ENCODE measurements at regions of chr11 and their contacts with region 1.

Region 1: DNA sequence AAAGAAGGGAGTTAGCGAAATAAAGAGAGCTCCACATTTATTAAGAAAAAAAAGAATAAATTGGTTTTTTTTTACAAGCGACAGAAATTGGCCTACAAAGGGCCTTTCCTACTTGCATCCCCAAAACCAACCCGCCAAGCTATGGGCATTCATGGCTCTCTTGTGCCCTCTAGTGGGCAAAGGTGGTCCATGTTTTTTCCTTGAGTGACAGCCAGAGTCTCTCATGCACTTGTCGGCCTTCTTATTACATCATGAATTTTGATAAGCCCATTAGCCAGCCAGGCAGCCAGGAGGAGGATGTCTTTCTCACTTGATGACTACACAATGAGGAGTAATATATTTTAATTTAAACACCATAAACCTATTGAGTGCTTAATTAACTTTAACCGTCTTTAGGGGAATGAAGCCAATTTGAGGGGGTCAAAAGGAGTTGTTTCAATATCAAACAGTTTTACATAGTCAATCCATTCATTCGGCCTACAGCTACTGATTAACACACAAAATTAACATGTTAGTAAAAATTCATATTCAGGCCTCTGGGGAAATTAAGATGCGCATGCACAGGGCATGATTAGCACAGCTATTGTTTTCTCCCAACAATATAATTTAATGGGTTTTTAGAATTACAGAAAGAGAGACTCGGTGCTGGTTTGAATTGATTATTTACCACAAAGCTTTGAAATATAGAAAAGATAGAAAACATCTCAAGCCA is 85.5 kb downstream of the RCN1 start:
- DNase-seq: peak; percentile 81 to 88
- H3K4me3 ChIP-seq: no peak overlapping the region
- H3K4me3 Mint-ChIP-seq: no peak overlapping the region
- H3K27ac Mint-ChIP-seq: no peak overlapping the region
- H3K4me1 ChIP-seq: no peaks in the 10 kb centered on the region
- H3K4me1 Mint-ChIP-seq: no peaks in the 10 kb centered on the region
- H3K27me3 ChIP-seq: no peaks in the 10 kb centered on the region
- H3K27me3 Mint-ChIP-seq: peaks cover 20% of the 10 kb centered on the region
- CTCF ChIP-seq: peak; percentile 87

Region 2: DNA sequence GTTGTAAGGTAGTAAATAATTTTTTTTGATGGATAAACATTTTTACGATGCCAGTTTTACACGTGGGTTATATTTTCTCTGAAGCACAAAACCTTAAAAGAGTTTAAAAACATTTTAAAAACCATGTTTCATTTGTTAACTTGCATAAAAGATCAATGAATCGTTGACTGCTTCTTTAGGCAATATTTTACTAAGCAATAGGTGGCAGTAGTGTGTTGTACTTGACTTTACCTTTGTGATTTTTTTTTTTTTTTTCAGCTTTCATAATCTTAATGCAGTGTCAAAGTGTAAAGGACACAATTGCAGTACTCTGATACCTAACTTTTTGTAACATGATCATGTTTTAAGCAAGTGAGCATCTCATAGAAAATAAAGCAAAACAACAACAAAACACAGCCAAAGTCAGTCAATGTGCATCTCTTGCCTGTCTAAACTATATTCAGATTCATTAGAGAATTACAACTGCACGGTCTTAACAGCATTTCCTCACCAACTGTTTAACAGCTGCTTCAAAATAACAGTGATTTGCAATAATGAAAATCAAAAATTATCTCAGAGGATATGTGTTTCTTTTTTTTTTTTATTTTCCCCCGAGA is 779.0 kb before region 1 on chr11:
- CTCF ChIA-PET with region 1: no interaction called
- POLR2A ChIA-PET with region 1: no interaction called
- intact Hi-C with region 1: loop called (anchors 1 kb)
- DNase-seq: peak in 1 of 2 experiments; percentile 17
- H3K4me3 ChIP-seq: no peak overlapping the region
- H3K4me3 Mint-ChIP-seq: no peak overlapping the region
- H3K27ac Mint-ChIP-seq: no peak overlapping the region
- H3K4me1 ChIP-seq: no peaks in the 10 kb centered on the region
- H3K4me1 Mint-ChIP-seq: no peaks in the 10 kb centered on the region
- H3K27me3 ChIP-seq: no peaks in the 10 kb centered on the region
- H3K27me3 Mint-ChIP-seq: no peaks in the 10 kb centered on the region
- CTCF ChIP-seq: peak; percentile 51

Region 3: GRCh38 chr11:32052218-32052617 is 124.2 kb before region 1 on chr11:
- CTCF ChIA-PET with region 1: interaction called, 35 read pairs
- POLR2A ChIA-PET with region 1: no interaction called
- intact Hi-C with region 1: loop called (anchors 1 kb)
- DNase-seq: peak; percentile 42 to 64
- H3K4me3 ChIP-seq: no peak overlapping the region
- H3K4me3 Mint-ChIP-seq: no peak overlapping the region
- H3K27ac Mint-ChIP-seq: no peak overlapping the region
- H3K4me1 ChIP-seq: no peaks in the 10 kb centered on the region
- H3K4me1 Mint-ChIP-seq: no peaks in the 10 kb centered on the region
- H3K27me3 ChIP-seq: no peaks in the 10 kb centered on the region; the same call in 1 of the 2 replicates
- H3K27me3 Mint-ChIP-seq: peaks cover 27% of the 10 kb centered on the region
- CTCF ChIP-seq: peak; percentile 68 to 80

Region 4: GRCh38 chr11:32109138-32109537 is 67.2 kb before region 1 on chr11:
- CTCF ChIA-PET with region 1: no interaction called
- POLR2A ChIA-PET with region 1: no interaction called
- intact Hi-C with region 1: no loop called
- DNase-seq: no peak
- H3K4me3 ChIP-seq: no peak overlapping the region
- H3K4me3 Mint-ChIP-seq: no peak overlapping the region
- H3K27ac Mint-ChIP-seq: no peak overlapping the region
- H3K4me1 ChIP-seq: no peaks in the 10 kb centered on the region
- H3K4me1 Mint-ChIP-seq: no peaks in the 10 kb centered on the region
- H3K27me3 ChIP-seq: no peaks in the 10 kb centered on the region
- H3K27me3 Mint-ChIP-seq: peaks cover 9% of the 10 kb centered on the region
- CTCF ChIP-seq: no peak

Region 5: DNA sequence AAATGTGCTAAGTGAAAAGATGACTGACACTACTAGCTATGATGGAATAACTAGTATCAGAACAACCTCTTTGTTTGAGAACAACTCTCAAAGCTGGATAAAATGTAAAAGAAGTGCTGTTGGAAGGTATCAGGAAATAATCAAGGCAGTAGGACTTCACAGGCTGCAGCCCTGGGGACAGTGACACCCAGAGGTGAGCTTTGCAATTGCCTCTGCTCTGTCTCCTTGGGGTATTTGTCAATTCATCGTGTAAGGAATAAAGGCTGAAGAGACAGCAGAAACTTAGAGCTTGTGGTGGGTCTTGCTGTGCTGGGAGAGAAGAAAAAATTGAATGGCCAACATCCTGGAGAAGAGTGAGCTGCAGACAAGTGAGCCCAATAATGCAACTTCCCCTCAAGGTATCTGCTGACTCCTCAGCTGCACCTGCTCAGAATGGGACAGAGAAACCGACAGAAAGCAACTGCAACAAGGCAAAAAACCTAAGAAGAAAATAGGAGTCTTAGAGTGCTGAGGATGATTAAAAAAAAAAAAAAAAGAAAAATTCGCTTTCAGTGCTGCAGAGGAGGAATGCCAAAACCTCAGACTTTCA is 55.6 kb after region 1 on chr11:
- CTCF ChIA-PET with region 1: interaction called, 4 read pairs
- POLR2A ChIA-PET with region 1: no interaction called
- intact Hi-C with region 1: loop called (anchors 1 kb)
- DNase-seq: peak; percentile 52 to 56
- H3K4me3 ChIP-seq: no peak overlapping the region
- H3K4me3 Mint-ChIP-seq: no peak overlapping the region
- H3K27ac Mint-ChIP-seq: no peak overlapping the region
- H3K4me1 ChIP-seq: no peaks in the 10 kb centered on the region
- H3K4me1 Mint-ChIP-seq: peaks cover 6% of the 10 kb centered on the region
- H3K27me3 ChIP-seq: no peaks in the 10 kb centered on the region
- H3K27me3 Mint-ChIP-seq: peaks cover 8% of the 10 kb centered on the region
- CTCF ChIP-seq: peak; percentile 78 to 82

Measured in Caco-2 (cell line).